IMR-90 (cell line): ENCODE measurements at regions of chr17 and their contacts with region 1.

Region 1: GRCh38 chr17:21214015-21214776 is at the start of gene TMEM11:
- DNase-seq: peak; percentile 94
- ATAC-seq: peak; percentile 94
- H3K4me3 ChIP-seq: peak within 1 kb of the TSS; percentile 87
- H3K27ac ChIP-seq: peak within 1 kb of the TSS; percentile 97
- H3K4me1 ChIP-seq: peaks cover 8% of the 10 kb centered on the region
- H3K27me3 ChIP-seq: no peaks in the 10 kb centered on the region
- CTCF ChIP-seq: peak; percentile 24; the same call in 1 of the 2 replicates
- POLR2A ChIP-seq: peak; percentile 67
- RAD21 ChIP-seq: no peak
- total RNA-seq, gene TMEM11: 19.2 and 19.9 TPM in 2 replicates

Region 2: GRCh38 chr17:21043286-21044232 is 170.6 kb before region 1 on chr17:
- CTCF ChIA-PET with region 1: no interaction called
- POLR2A ChIA-PET with region 1: no interaction called
- dilution Hi-C with region 1: no loop called
- in situ Hi-C with region 1: no loop called
- intact Hi-C with region 1: loop called (anchors 5 kb)
- DNase-seq: peak; percentile 98
- ATAC-seq: peak; percentile 82
- H3K4me3 ChIP-seq: peak overlapping the region; percentile 56
- H3K27ac ChIP-seq: peak overlapping the region; percentile 93
- H3K4me1 ChIP-seq: peaks cover 9% of the 10 kb centered on the region
- H3K27me3 ChIP-seq: no peaks in the 10 kb centered on the region
- CTCF ChIP-seq: peak; percentile 70
- POLR2A ChIP-seq: no peak
- RAD21 ChIP-seq: peak; percentile 44

Region 3: GRCh38 chr17:21126645-21127510 is 87.3 kb before region 1 on chr17 and contains the start of gene DHRS7B:
- CTCF ChIA-PET with region 1: interaction called, 3 read pairs
- POLR2A ChIA-PET with region 1: no interaction called
- dilution Hi-C with region 1: no loop called
- in situ Hi-C with region 1: no loop called
- intact Hi-C with region 1: loop called (anchors 1 kb)
- DNase-seq: peak; percentile 88
- ATAC-seq: peak; percentile 93
- H3K4me3 ChIP-seq: peak within 1 kb of the TSS; percentile 64
- H3K27ac ChIP-seq: peak within 1 kb of the TSS; percentile 62
- H3K4me1 ChIP-seq: no peaks in the 10 kb centered on the region
- H3K27me3 ChIP-seq: no peaks in the 10 kb centered on the region
- CTCF ChIP-seq: no peak
- POLR2A ChIP-seq: peak; percentile 70
- RAD21 ChIP-seq: no peak
- total RNA-seq, gene DHRS7B: 24.2 and 34.4 TPM in 2 replicates

Region 4: GRCh38 chr17:21166595-21167210 is 47.5 kb before region 1 on chr17:
- CTCF ChIA-PET with region 1: no interaction called
- POLR2A ChIA-PET with region 1: no interaction called
- dilution Hi-C with region 1: no loop called
- in situ Hi-C with region 1: no loop called
- intact Hi-C with region 1: loop called (anchors 5 kb)
- DNase-seq: peak; percentile 11
- ATAC-seq: peak; percentile 47
- H3K4me3 ChIP-seq: no peak overlapping the region
- H3K27ac ChIP-seq: peak overlapping the region; percentile 39; the same call in 1 of the 2 replicates
- H3K4me1 ChIP-seq: peaks cover 16% of the 10 kb centered on the region
- H3K27me3 ChIP-seq: no peaks in the 10 kb centered on the region
- CTCF ChIP-seq: no peak
- POLR2A ChIP-seq: no peak
- RAD21 ChIP-seq: no peak

Region 5: GRCh38 chr17:21199299-21199698 is 14.9 kb before region 1 on chr17:
- CTCF ChIA-PET with region 1: interaction called, 3 read pairs
- POLR2A ChIA-PET with region 1: interaction called, 10 read pairs
- dilution Hi-C with region 1: no loop called
- in situ Hi-C with region 1: no loop called
- intact Hi-C with region 1: no loop called
- DNase-seq: no peak
- ATAC-seq: no peak
- H3K4me3 ChIP-seq: no peak overlapping the region
- H3K27ac ChIP-seq: no peak overlapping the region
- H3K4me1 ChIP-seq: peaks cover 2% of the 10 kb centered on the region; the same call in 1 of the 2 replicates
- H3K27me3 ChIP-seq: no peaks in the 10 kb centered on the region
- CTCF ChIP-seq: no peak
- POLR2A ChIP-seq: no peak
- RAD21 ChIP-seq: no peak

Region 6: GRCh38 chr17:21263351-21263750 is 49.2 kb after region 1 on chr17:
- CTCF ChIA-PET with region 1: no interaction called
- POLR2A ChIA-PET with region 1: no interaction called
- dilution Hi-C with region 1: no loop called
- in situ Hi-C with region 1: no loop called
- intact Hi-C with region 1: no loop called
- DNase-seq: peak; percentile 67
- ATAC-seq: no peak
- H3K4me3 ChIP-seq: no peak overlapping the region
- H3K27ac ChIP-seq: no peak overlapping the region
- H3K4me1 ChIP-seq: peaks cover 4% of the 10 kb centered on the region; the same call in 1 of the 2 replicates
- H3K27me3 ChIP-seq: no peaks in the 10 kb centered on the region; the same call in 1 of the 2 replicates
- CTCF ChIP-seq: no peak
- POLR2A ChIP-seq: no peak
- RAD21 ChIP-seq: no peak

Region 7: DNA sequence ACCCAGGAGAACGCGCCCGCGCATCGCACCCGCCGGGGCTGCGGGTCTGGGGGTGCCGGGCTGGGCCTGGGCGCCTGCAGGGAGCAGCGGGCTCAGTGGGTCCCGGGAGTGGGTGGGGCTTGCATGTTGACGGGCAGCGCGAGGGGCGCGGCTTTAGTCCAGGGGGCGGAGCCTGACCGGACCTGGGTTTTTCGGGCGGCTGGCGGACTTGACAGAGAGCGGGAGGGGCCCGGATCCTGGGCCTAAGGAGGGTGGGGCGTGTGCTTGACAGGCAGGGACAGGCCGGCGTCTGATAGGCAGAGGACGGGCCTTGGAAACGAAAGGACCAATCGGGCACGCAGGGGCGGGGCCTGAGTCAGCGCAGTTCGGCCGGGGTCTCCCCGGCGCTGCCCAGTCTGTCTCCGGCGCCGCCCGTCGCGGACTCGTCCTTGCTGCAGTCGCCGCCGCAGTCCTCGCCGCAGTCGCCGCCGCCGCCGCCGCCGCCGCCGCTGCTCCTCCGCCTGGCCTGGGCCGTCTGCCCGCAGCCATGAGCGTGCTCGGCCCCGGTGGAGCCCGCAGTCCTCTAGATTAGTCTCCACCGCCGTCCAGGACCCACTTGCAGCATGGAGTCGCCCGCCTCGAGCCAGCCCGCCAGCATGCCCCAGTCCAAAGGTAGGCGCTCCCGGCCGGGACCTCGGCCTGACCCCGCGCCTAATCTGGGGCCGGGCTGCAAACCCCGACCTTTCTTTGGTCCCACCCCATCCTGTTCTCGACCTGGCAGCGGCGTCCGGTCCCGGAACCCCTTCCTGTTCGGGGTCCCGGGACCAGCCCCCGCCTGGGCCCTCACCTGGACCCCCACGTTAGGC is 70.3 kb after region 1 on chr17 and contains the start of gene MAP2K3:
- CTCF ChIA-PET with region 1: no interaction called
- POLR2A ChIA-PET with region 1: interaction called, 3 read pairs
- dilution Hi-C with region 1: no loop called
- in situ Hi-C with region 1: no loop called
- intact Hi-C with region 1: loop called (anchors 5 kb)
- DNase-seq: peak; percentile 99
- ATAC-seq: peak; percentile 81
- H3K4me3 ChIP-seq: peak within 1 kb of the TSS; percentile 84
- H3K27ac ChIP-seq: peak within 1 kb of the TSS; percentile 83
- H3K4me1 ChIP-seq: peaks cover 47% of the 10 kb centered on the region
- H3K27me3 ChIP-seq: no peaks in the 10 kb centered on the region
- CTCF ChIP-seq: no peak
- POLR2A ChIP-seq: peak; percentile 97
- RAD21 ChIP-seq: no peak
- total RNA-seq, gene MAP2K3: 23.5 and 25.0 TPM in 2 replicates

Region 8: GRCh38 chr17:21457051-21458026 is 243.1 kb after region 1 on chr17:
- CTCF ChIA-PET with region 1: no interaction called
- POLR2A ChIA-PET with region 1: no interaction called
- dilution Hi-C with region 1: no loop called
- in situ Hi-C with region 1: no loop called
- intact Hi-C with region 1: no loop called
- DNase-seq: peak; percentile 89
- ATAC-seq: peak; percentile 97
- H3K4me3 ChIP-seq: no peak overlapping the region
- H3K27ac ChIP-seq: no peak overlapping the region
- H3K4me1 ChIP-seq: peaks cover 4% of the 10 kb centered on the region; the same call in 1 of the 2 replicates
- H3K27me3 ChIP-seq: peaks cover 42% of the 10 kb centered on the region
- CTCF ChIP-seq: peak; percentile 89
- POLR2A ChIP-seq: no peak
- RAD21 ChIP-seq: peak; percentile 74

Region 9: GRCh38 chr17:21511363-21512198 is 297.4 kb after region 1 on chr17:
- CTCF ChIA-PET with region 1: no interaction called
- POLR2A ChIA-PET with region 1: no interaction called
- dilution Hi-C with region 1: no loop called
- in situ Hi-C with region 1: no loop called
- intact Hi-C with region 1: loop called (anchors 2 kb)
- DNase-seq: peak; percentile 75
- ATAC-seq: peak; percentile 95
- H3K4me3 ChIP-seq: peak overlapping the region; percentile 41
- H3K27ac ChIP-seq: no peak overlapping the region
- H3K4me1 ChIP-seq: no peaks in the 10 kb centered on the region
- H3K27me3 ChIP-seq: peaks cover 15% of the 10 kb centered on the region
- CTCF ChIP-seq: peak; percentile 80
- POLR2A ChIP-seq: no peak
- RAD21 ChIP-seq: peak; percentile 72